Spleen (tissue), 13 donors: ENCODE measurements at regions of chr3 and their contacts with region 1.

Region 1: GRCh38 chr3:48439820-48440589 is at the starts of genes CCDC51 and TMA7:
- DNase-seq: peak; percentile 99
- H3K4me3 ChIP-seq: peak within 1 kb of the TSS; percentile 64 to 94 (median 81)
- H3K27ac ChIP-seq: peak within 1 kb of the TSS; percentile 89 to 96 (median 96)
- H3K4me1 ChIP-seq: peaks cover 24 to 78% (median 45%) of the 10 kb centered on the region in 6 donors
- H3K27me3 ChIP-seq: no peaks in the 10 kb centered on the region
- CTCF ChIP-seq: peak in 3 of 11 experiments; percentile 7 to 47 (median 47)
- POLR2A ChIP-seq: peak in 2 of 3 donors; percentile 53 to 84
- total RNA-seq, gene CCDC51: 8.4 to 22.2 (median 18.7) TPM
- total RNA-seq, gene TMA7: 145 to 258 (median 170) TPM

Region 2: DNA sequence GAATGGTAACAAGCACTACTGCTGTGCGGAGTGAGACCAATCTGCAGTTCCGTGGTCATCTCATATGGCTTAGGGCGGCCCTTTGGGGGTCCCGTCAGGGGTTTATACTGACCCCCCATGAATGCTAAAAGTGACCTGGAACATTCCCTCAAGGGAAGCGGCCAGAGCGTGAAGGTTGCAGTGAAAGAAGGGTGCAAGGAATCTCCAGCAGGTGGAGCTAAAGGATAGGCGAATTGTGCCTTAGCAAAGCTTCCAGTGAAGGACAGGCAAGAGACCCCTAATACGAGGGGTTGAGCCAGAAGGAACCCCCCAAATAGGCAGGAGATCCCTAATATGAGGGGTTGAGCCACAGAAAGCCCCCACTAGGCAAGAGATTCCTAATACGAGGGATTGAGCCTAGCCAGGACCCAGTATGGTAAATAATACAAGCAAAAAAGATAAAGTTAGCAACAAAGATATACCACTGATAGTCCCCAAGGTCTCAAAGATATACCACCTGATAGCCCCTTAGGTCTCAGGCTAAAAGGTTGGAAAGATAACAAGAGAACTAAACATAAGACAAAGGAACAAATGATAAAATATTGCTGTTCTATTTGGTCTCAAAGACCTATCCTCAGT is 166.3 kb before region 1 on chr3:
- intact Hi-C with region 1: loop called (anchors 10 kb)
- DNase-seq: no peak
- H3K4me3 ChIP-seq: no peak overlapping the region
- H3K27ac ChIP-seq: no peak overlapping the region
- H3K4me1 ChIP-seq: peaks cover 0 to 13% (median 3%) of the 10 kb centered on the region in 6 donors
- H3K27me3 ChIP-seq: no peaks in the 10 kb centered on the region
- CTCF ChIP-seq: peak; percentile 70 to 89 (median 81)
- POLR2A ChIP-seq: no peak

Region 3: GRCh38 chr3:48400824-48401433 is 39.1 kb before region 1 on chr3:
- intact Hi-C with region 1: loop called (anchors 2 kb)
- DNase-seq: peak; percentile 77
- H3K4me3 ChIP-seq: no peak overlapping the region
- H3K27ac ChIP-seq: no peak overlapping the region
- H3K4me1 ChIP-seq: peaks cover 0 to 55% (median 19%) of the 10 kb centered on the region in 6 donors
- H3K27me3 ChIP-seq: no peaks in the 10 kb centered on the region
- CTCF ChIP-seq: peak; percentile 81 to 93 (median 89)
- POLR2A ChIP-seq: no peak

Region 4: DNA sequence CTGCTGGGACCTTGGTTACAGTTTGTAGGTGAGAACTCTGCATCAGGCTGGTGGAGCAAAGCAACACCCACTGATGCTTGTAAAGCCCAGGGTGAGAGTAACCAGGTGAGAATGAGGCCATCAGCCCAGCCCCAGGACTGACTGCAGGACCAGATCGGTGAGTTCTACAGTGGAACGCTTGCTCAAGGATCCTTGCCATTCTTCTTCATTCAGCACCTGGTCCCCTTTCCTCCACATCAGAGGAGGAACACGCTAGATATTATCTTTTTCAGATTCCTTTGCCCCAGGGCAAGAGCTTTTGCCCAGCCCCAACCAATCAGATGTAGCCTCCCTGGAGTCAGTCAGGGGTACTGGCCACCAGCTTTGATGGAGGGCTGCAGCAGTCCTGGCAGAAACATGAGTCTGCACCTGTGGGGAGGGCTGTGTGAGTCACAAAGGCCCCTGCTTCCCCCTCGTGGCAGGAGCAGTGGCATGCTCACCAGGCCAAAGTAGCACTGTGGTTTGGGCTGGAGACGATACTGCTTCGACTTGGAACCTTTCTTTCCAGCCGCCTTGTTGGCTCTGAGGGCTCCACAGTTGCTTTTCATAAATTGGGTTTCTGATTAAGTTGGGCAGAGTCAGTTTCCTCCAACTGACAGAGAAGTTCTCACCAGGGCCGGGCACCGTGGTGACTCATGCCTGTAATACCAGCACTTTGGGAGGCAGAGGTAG is 67.5 kb after region 1 on chr3:
- intact Hi-C with region 1: loop called (anchors 10 kb)
- DNase-seq: peak; percentile 91
- H3K4me3 ChIP-seq: no peak overlapping the region
- H3K27ac ChIP-seq: peak overlapping the region in 3 of 8 donors; percentile 33 to 55 (median 55)
- H3K4me1 ChIP-seq: peaks cover 15 to 48% (median 37%) of the 10 kb centered on the region in 6 donors
- H3K27me3 ChIP-seq: no peaks in the 10 kb centered on the region
- CTCF ChIP-seq: peak; percentile 57 to 89 (median 78)
- POLR2A ChIP-seq: no peak